ENCODE measurements at regions of chr7 and their contacts with region 1.

Region 1: GRCh38 chr7:3065724-3066143 is 22.1 kb upstream of the CARD11 start:
- DNase-seq: peak; percentile 37
- H3K4me3 Mint-ChIP-seq: no peak overlapping the region
- H3K27ac Mint-ChIP-seq: peak overlapping the region; percentile 78
- H3K4me1 Mint-ChIP-seq: peaks cover 88% of the 10 kb centered on the region
- H3K27me3 Mint-ChIP-seq: no peaks in the 10 kb centered on the region

Region 2: GRCh38 chr7:2894118-2894940 is 171.4 kb before region 1 on chr7:
- intact Hi-C with region 1: loop called (anchors 5 kb)
- DNase-seq: peak; percentile 43
- H3K4me3 Mint-ChIP-seq: peak overlapping the region; percentile 87
- H3K27ac Mint-ChIP-seq: peak overlapping the region; percentile 99
- H3K4me1 Mint-ChIP-seq: peaks cover 37% of the 10 kb centered on the region
- H3K27me3 Mint-ChIP-seq: peaks cover 1% of the 10 kb centered on the region

Region 3: GRCh38 chr7:3028071-3028757 is 37.5 kb before region 1 on chr7:
- intact Hi-C with region 1: loop called (anchors 1 kb)
- DNase-seq: peak; percentile 8
- H3K4me3 Mint-ChIP-seq: peak overlapping the region; percentile 60
- H3K27ac Mint-ChIP-seq: peak overlapping the region; percentile 92
- H3K4me1 Mint-ChIP-seq: peaks cover 60% of the 10 kb centered on the region
- H3K27me3 Mint-ChIP-seq: no peaks in the 10 kb centered on the region

Region 4: DNA sequence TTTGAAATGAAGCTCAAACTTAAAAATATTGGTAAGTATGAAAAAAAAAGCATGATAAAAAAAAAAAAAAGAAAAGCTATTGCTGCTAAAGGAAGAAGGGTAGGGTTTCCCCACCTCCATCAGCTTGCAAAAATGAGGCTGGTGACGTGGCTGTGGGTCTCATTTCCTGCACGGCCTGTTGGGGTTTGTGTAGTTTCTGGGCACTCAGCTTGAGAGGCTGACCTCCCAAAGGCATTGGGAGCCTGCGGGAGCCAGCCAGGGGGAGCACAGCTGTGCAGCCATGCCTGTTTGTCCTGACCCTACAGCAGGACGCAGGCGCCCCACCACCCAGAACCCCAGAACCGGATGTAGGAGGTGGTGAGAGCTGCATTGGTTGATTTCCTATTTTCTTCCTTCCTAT is 26.7 kb after region 1 on chr7:
- intact Hi-C with region 1: loop called (anchors 1 kb)
- DNase-seq: peak; percentile 74
- H3K4me3 Mint-ChIP-seq: peak overlapping the region; percentile 15
- H3K27ac Mint-ChIP-seq: peak overlapping the region; percentile 94
- H3K4me1 Mint-ChIP-seq: peaks cover 56% of the 10 kb centered on the region
- H3K27me3 Mint-ChIP-seq: no peaks in the 10 kb centered on the region

Region 5: DNA sequence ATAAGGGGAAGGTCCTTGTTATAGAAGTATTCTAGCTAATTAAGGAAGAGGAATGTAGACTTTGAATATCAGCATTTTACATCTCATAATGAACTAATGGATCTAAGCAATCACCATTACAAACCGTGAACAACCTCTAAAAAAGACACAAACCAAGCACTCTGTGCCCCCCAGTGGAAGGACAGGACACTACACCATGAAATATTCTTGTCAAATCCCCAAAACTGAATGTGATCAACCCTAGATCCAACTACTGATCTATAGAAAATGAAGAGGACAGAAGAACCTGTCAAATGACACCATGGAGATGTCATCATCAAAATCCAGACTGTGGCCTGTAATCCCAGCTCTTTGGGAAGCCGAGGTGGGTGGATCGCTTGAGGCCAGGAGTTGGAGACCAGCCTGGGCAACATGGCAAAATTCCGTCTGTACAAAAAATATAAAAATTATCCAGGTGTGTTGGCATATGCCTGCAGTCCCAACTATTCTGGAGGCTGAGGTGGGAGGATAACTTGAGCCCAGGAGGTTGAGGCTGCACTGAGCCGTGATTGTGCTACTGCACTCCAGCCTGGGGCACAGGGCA is 89.3 kb after region 1 on chr7:
- intact Hi-C with region 1: loop called (anchors 1 kb)
- DNase-seq: peak; percentile 46
- H3K4me3 Mint-ChIP-seq: no peak overlapping the region
- H3K27ac Mint-ChIP-seq: no peak overlapping the region
- H3K4me1 Mint-ChIP-seq: peaks cover 34% of the 10 kb centered on the region
- H3K27me3 Mint-ChIP-seq: peaks cover 9% of the 10 kb centered on the region

Measured in activated T-helper 1 cell treated with anti-CD3 and anti-CD28 coated beads, Interleukin-12 subunit alpha, Interleukin-12 subunit beta, Interleukin-2, Interleukin-4 antibody, amounts not matched to agents 30 ng/mL and 10 ng/mL and 1 ng/mL, durations not matched to agents 14 hours and 24 hours and 36 hours (primary cell).